Tibial artery (tissue), 4 donors: ENCODE measurements at regions of chr1 and their contacts with region 1.

Region 1: DNA sequence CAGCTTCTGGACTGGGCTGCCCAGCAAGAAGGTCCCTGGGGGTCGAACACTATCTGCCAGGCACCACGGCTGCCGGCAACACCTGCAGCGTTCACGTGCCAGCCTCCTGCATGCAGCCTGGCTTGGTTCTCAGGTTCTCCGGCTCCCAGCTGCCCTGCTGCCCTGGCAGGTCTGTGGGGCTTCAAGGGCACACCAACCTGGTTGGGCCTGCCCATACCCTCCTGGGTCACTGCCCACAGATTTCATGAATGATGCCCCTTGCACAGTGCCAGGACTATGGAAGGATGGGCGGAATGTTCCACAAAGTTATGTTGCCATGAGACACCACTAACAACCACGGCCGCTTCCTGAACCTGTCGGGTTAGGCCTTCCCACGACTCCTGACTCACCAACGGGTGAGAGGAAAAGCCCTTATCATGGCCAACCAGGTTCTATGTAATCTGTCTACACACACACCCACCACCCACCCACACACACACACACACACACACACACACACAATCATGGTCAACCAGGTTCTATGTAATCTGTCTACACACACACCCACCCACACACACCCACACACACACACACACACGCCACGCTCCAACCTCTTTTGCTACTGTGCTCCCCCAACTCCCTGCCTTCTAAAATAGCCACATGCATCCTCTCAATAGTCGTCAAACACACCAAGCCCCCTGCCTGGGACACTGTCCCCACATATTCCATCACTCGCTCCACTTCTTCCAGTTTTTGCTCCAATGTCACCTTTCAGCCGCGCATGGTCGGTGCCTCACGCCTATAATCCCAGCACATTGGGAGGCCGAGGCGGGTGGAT is 32.2 kb downstream of the HSPG2 start:
- DNase-seq: peak; percentile 73 to 87
- H3K4me3 ChIP-seq: no peak overlapping the region
- H3K27ac ChIP-seq: peak overlapping the region; percentile 96 to 97
- H3K4me1 ChIP-seq: peaks cover 34 to 100% (median 97%) of the 10 kb centered on the region in 4 donors
- H3K27me3 ChIP-seq: no peaks in the 10 kb centered on the region
- CTCF ChIP-seq: no peak

Region 2: DNA sequence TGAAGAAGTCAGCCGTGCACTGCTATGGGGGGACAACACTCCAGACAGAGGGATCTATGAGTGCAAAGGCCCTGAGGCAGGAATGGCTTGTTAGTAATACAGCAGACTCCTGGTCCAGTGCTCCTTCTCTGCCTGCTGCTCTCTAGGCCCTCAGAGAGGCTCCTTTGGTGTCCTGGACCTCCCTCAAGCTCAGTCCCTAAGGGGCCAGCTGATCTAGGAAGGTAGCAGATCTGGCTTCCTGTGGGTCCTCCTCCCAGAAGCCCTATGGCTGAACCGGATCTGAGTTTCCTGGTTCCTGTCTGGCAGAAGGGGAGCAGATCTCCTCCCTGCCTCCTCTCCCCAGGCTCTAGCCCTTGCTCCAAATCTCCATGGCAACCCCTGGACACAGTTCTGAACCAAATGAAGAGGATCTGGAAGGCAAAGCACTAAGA is 93.0 kb before region 1 on chr1 and contains the start of gene LDLRAD2:
- intact Hi-C with region 1: no loop called
- DNase-seq: no peak
- H3K4me3 ChIP-seq: no peak within 1 kb of the TSS
- H3K27ac ChIP-seq: no peak within 1 kb of the TSS
- H3K4me1 ChIP-seq: peaks cover 0 to 8% (median 6%) of the 10 kb centered on the region in 4 donors
- H3K27me3 ChIP-seq: peaks cover 0 to 4% of the 10 kb centered on the region in 2 donors
- CTCF ChIP-seq: no peak

Region 3: DNA sequence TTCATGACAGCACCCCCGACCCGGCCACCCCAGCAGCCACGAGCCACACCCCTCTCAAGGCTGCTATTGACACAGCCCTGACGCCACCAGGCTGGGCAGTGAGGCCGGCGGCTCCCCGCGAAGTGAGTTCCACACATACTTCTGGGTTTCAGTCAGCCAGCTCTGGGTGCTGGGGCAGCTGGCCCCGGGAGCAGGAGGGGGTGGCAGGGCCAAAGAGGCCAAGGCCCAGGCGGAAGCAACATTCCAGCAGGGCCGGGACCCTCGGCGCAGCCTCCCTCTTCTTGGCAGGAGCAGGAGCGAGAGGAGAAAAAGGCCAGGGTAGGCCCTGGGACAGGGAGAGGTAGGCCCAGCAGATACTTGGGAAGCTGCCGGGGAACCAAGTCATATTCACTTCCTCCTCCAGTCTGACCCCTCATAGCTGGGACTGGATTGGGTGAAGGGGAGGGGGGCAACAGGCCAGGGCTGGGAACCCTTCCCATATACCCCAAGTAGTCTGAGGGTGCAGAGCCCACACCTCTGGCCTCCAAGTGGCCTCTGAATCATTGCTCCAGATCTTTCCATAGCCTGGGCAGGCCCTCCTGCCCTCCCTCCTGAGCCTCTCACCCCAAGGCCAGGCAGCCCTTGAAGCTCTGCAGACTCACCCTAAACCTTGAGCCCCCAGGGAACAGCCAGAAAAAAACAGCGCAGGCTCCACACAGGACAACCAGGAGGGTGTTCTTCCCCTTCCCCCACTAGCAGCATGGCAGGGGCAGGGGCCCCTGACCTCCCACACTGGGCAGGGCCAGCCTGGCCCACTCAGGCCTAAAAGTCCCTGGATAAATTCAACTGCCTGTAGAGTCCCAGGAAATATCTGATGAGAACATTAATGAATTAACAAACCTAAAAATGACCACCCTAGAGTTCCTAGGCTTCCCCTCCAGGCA is 26.5 kb after region 1 on chr1:
- intact Hi-C with region 1: loop called (anchors 2 kb)
- DNase-seq: peak; percentile 86 to 93
- H3K4me3 ChIP-seq: peak overlapping the region; percentile 11 to 24
- H3K27ac ChIP-seq: peak overlapping the region; percentile 96 to 97
- H3K4me1 ChIP-seq: peaks cover 16 to 89% (median 76%) of the 10 kb centered on the region in 4 donors
- H3K27me3 ChIP-seq: no peaks in the 10 kb centered on the region
- CTCF ChIP-seq: no peak

Region 4: DNA sequence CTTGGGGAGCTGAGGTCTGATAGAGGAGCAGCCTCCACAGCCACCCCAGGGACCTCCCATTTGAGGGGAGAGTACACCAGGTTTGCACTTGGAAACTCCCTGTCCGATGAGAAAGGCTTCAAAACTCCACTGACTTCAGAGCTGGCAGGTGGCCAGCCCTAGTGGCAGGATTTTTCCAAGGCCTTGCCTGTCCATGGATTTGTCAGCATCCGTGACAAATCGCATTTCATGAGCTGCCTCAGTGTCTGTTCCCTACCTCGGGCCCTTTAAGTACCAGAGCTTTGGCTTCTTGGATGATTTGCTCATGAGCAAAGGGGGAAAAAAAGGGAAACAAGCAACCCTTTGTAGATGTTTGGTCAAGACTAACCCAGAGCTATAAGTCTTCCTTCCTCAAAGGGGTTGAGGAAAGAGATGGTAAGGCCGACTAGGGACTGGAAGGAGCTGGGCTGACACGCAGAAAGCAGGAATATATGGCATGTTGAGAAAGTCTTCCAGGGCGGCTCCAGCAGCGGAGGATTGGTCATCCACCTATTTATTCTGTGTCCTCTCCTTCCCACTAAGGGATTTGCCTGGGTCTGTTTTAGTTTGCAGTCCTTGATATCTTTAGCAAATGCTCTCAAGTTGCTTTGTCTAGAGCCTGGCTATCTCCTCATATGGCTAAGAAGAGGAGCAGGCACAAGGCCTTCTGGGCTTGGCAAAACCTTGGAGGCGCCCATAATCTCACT is 34.9 kb after region 1 on chr1:
- intact Hi-C with region 1: loop called (anchors 5 kb)
- DNase-seq: peak; percentile 91 to 96
- H3K4me3 ChIP-seq: no peak overlapping the region
- H3K27ac ChIP-seq: peak overlapping the region; percentile 88 to 89
- H3K4me1 ChIP-seq: peaks cover 0 to 79% (median 64%) of the 10 kb centered on the region in 4 donors
- H3K27me3 ChIP-seq: no peaks in the 10 kb centered on the region
- CTCF ChIP-seq: peak; percentile 64 to 79

Region 5: GRCh38 chr1:22031214-22031962 is 126.5 kb after region 1 on chr1:
- intact Hi-C with region 1: no loop called
- DNase-seq: no peak
- H3K4me3 ChIP-seq: no peak overlapping the region
- H3K27ac ChIP-seq: no peak overlapping the region
- H3K4me1 ChIP-seq: peaks cover 0 to 1% (median under 1%) of the 10 kb centered on the region in 4 donors
- H3K27me3 ChIP-seq: no peaks in the 10 kb centered on the region
- CTCF ChIP-seq: no peak

Region 6: GRCh38 chr1:22089787-22090186 is 184.9 kb after region 1 on chr1:
- intact Hi-C with region 1: no loop called
- DNase-seq: no peak
- H3K4me3 ChIP-seq: peak overlapping the region in 1 of 2 donors; percentile 20
- H3K27ac ChIP-seq: peak overlapping the region in 1 of 2 donors; percentile 27
- H3K4me1 ChIP-seq: peaks cover 0 to 63% (median 32%) of the 10 kb centered on the region in 4 donors
- H3K27me3 ChIP-seq: no peaks in the 10 kb centered on the region
- CTCF ChIP-seq: no peak